ENCODE measurements at regions of chr9 and their contacts with region 1.

Region 1: GRCh38 chr9:113275157-113276131 is at the starts of genes CDC26 and PRPF4:
- DNase-seq: peak; percentile 93 to 97 (median 93)
- H3K4me3 ChIP-seq: peak within 1 kb of the TSS; percentile 92
- H3K4me3 Mint-ChIP-seq: no peak within 1 kb of the TSS
- H3K27ac ChIP-seq: peak within 1 kb of the TSS; percentile 95
- H3K27ac Mint-ChIP-seq: no peak within 1 kb of the TSS
- H3K4me1 ChIP-seq: peaks cover 23% of the 10 kb centered on the region
- H3K4me1 Mint-ChIP-seq: peaks cover 27 to 40% (median 37%) of the 10 kb centered on the region in 3 donors
- H3K27me3 ChIP-seq: no peaks in the 10 kb centered on the region
- H3K27me3 Mint-ChIP-seq: no peaks in the 10 kb centered on the region
- total RNA-seq, gene CDC26: 51.1 to 56.5 TPM
- total RNA-seq, gene PRPF4: 69.5 to 71.4 TPM

Region 2: GRCh38 chr9:113192455-113192854 is 83.0 kb before region 1 on chr9:
- CTCF ChIA-PET with region 1: no interaction called
- POLR2A ChIA-PET with region 1: no interaction called
- DNase-seq: no peak
- H3K4me3 ChIP-seq: no peak overlapping the region
- H3K4me3 Mint-ChIP-seq: no peak overlapping the region
- H3K27ac ChIP-seq: no peak overlapping the region
- H3K27ac Mint-ChIP-seq: no peak overlapping the region
- H3K4me1 ChIP-seq: no peaks in the 10 kb centered on the region
- H3K4me1 Mint-ChIP-seq: peaks cover 0 to 3% (median 0%) of the 10 kb centered on the region in 3 donors
- H3K27me3 ChIP-seq: no peaks in the 10 kb centered on the region
- H3K27me3 Mint-ChIP-seq: no peaks in the 10 kb centered on the region

Region 3: GRCh38 chr9:113221003-113221799 is 54.2 kb before region 1 on chr9 and contains the starts of genes FKBP15 and SLC31A1:
- CTCF ChIA-PET with region 1: interaction called, 19 read pairs
- POLR2A ChIA-PET with region 1: interaction called, 5 read pairs
- DNase-seq: peak; percentile 95 to 97 (median 97)
- H3K4me3 ChIP-seq: peak within 1 kb of the TSS; percentile 96
- H3K4me3 Mint-ChIP-seq: peak within 1 kb of the TSS; percentile 93 to 99 (median 95)
- H3K27ac ChIP-seq: peak within 1 kb of the TSS; percentile 91
- H3K27ac Mint-ChIP-seq: peak within 1 kb of the TSS; percentile 91 to 100 (median 96)
- H3K4me1 ChIP-seq: peaks cover 34% of the 10 kb centered on the region
- H3K4me1 Mint-ChIP-seq: peaks cover 39 to 65% (median 55%) of the 10 kb centered on the region in 3 donors
- H3K27me3 ChIP-seq: no peaks in the 10 kb centered on the region
- H3K27me3 Mint-ChIP-seq: no peaks in the 10 kb centered on the region
- total RNA-seq, gene FKBP15: 29.8 to 30.7 TPM
- total RNA-seq, gene SLC31A1: 13.7 to 15.1 TPM

Region 4: DNA sequence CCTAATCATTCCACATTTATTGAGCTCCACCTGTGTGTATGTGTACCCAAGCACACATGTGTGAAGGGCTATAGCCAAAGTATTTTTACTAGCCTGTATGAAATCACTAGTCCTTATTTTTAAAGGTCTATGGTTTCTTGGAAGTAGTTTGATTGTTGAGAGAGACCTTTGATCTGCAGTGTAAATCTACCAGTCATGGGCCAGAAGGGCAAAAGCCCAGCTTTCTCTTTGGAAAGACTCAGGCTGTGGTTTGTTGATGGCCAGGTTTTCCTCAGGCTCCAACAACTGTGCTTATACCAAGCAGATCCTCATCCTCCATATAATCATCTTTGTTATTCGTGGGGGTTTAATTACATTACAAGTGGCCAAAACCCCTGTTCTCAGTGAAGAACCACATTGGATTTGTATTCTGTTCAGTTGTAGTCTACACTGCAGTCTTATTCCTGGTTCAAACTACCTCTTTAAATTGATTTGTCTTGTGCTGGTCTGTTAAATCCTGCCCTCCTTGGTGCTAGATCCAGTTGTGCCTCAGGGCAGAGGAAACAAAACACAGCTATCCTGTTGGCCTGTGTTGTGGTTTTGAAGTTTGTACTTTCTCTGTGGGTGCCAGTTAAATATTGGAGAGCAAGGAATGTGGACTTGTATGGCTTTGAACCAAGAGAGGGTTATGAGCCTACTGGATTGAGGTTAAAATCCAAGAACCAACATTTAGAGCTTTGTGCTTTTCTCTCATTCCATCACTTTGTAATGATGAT is 13.3 kb before region 1 on chr9:
- CTCF ChIA-PET with region 1: interaction called, 10 read pairs
- POLR2A ChIA-PET with region 1: no interaction called
- DNase-seq: no peak
- H3K4me3 ChIP-seq: no peak overlapping the region
- H3K4me3 Mint-ChIP-seq: no peak overlapping the region
- H3K27ac ChIP-seq: no peak overlapping the region
- H3K27ac Mint-ChIP-seq: peak overlapping the region in 1 of 8 donors; percentile 32
- H3K4me1 ChIP-seq: no peaks in the 10 kb centered on the region
- H3K4me1 Mint-ChIP-seq: no peaks in the 10 kb centered on the region
- H3K27me3 ChIP-seq: no peaks in the 10 kb centered on the region
- H3K27me3 Mint-ChIP-seq: peaks cover 0 to 2% of the 10 kb centered on the region in 2 donors

Region 5: DNA sequence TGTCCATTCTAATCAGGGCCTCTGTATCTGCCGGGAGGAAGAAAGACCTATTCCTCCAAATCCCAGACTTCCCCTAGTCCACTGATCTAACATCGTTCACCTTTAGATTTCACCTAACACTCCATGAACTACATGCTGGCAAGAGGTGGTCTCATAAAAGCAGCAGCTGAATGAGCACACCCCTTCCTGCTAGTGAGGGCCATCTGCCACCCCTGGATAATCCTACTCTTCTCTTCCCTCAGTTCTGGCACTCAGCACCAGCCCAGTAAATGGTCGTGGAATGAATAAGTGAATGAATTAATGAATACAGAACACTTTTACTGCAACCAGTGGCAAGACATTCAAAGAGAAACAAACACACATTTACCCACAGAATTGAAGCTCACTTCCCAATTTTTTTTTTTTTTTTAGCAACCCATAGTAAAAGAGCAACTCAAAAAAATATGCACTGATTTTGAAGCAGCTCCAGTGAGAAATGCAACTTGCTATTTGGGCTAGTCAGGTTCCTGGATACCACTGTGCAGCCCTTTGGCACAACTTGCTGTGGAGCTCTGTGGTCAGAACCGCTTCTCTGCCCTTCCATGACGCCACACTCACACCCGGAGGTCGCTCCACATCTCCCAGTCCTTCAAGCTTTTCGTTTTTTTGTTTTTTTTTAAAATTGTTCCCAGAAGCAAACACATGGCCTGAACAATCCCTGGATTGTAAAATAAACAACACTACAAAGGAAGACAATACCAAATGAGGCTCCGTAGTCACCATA is 21.5 kb after region 1 on chr9:
- CTCF ChIA-PET with region 1: no interaction called
- POLR2A ChIA-PET with region 1: no interaction called
- DNase-seq: no peak
- H3K4me3 ChIP-seq: no peak overlapping the region
- H3K4me3 Mint-ChIP-seq: no peak overlapping the region
- H3K27ac ChIP-seq: no peak overlapping the region
- H3K27ac Mint-ChIP-seq: peak overlapping the region in 2 of 8 donors; percentile 32 to 68
- H3K4me1 ChIP-seq: no peaks in the 10 kb centered on the region
- H3K4me1 Mint-ChIP-seq: no peaks in the 10 kb centered on the region
- H3K27me3 ChIP-seq: no peaks in the 10 kb centered on the region
- H3K27me3 Mint-ChIP-seq: peaks cover 0 to 6% of the 10 kb centered on the region in 2 donors

Region 6: GRCh38 chr9:113401027-113401792 is 125.8 kb after region 1 on chr9 and contains the start of gene ALAD:
- CTCF ChIA-PET with region 1: interaction called, 62 read pairs
- POLR2A ChIA-PET with region 1: no interaction called
- DNase-seq: peak; percentile 99 to 100 (median 100)
- H3K4me3 ChIP-seq: peak within 1 kb of the TSS; percentile 82
- H3K4me3 Mint-ChIP-seq: peak within 1 kb of the TSS; percentile 92 to 99 (median 94)
- H3K27ac ChIP-seq: peak within 1 kb of the TSS; percentile 44
- H3K27ac Mint-ChIP-seq: peak within 1 kb of the TSS; percentile 69 to 96 (median 82)
- H3K4me1 ChIP-seq: peaks cover 16% of the 10 kb centered on the region
- H3K4me1 Mint-ChIP-seq: peaks cover 15 to 37% (median 19%) of the 10 kb centered on the region in 3 donors
- H3K27me3 ChIP-seq: no peaks in the 10 kb centered on the region
- H3K27me3 Mint-ChIP-seq: peaks cover 0 to 2% of the 10 kb centered on the region in 2 donors
- total RNA-seq, gene ALAD: 22.3 to 22.8 TPM

Region 7: DNA sequence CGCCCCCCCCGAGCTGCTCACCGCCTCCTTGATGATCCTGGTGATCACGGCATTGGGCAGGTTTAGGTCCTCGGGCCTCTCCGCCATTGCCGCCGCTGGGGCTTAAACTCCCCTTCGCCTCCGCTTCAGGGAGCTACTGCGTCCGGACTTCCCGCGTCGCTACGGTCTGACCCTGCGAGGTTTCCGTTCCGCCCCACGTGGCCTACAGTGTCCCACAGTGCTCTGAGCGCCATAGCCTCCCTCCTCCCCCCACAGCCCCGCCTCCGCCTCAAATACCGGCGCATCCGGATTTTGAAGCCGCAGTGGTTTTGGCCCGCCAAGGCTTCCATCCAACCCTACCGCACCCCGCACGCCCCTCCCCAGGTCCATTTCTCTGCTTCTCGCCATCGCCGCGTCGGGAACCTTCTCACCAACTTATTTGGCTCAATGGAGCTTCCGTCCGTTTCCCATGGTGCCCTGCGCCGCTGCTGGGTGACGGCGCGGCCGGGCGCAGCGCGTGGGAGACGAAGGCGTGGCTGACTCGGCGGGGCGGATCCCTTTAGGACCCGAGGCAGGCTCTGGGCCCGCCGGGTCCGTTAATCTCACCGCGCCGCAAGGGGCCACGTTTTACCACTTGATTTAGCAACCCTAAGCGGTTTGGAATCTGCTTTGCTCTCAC is 134.9 kb after region 1 on chr9 and contains the starts of genes C9orf43 and POLE3:
- CTCF ChIA-PET with region 1: interaction called, 62 read pairs
- POLR2A ChIA-PET with region 1: interaction called, 15 read pairs
- DNase-seq: peak; percentile 90 to 95 (median 94)
- H3K4me3 ChIP-seq: peak within 1 kb of the TSS; percentile 82
- H3K4me3 Mint-ChIP-seq: peak within 1 kb of the TSS; percentile 90 to 99 (median 97)
- H3K27ac ChIP-seq: peak within 1 kb of the TSS; percentile 91
- H3K27ac Mint-ChIP-seq: peak within 1 kb of the TSS; percentile 92 to 100 (median 98)
- H3K4me1 ChIP-seq: peaks cover 20% of the 10 kb centered on the region
- H3K4me1 Mint-ChIP-seq: peaks cover 28 to 41% (median 34%) of the 10 kb centered on the region in 3 donors
- H3K27me3 ChIP-seq: no peaks in the 10 kb centered on the region
- H3K27me3 Mint-ChIP-seq: peaks cover 0 to 3% of the 10 kb centered on the region in 2 donors
- total RNA-seq, gene C9orf43: 0.84 to 0.90 TPM
- total RNA-seq, gene POLE3: 88.2 to 88.5 TPM